Activated CD4-positive, alpha-beta memory T cell treated with anti-CD3 and anti-CD28 coated beads, Interleukin-2, amount 10 ng/mL, durations not matched to agents 7 days and 5 days (primary cell): ENCODE measurements at regions of chr4 and their contacts with region 1.

Region 1: DNA sequence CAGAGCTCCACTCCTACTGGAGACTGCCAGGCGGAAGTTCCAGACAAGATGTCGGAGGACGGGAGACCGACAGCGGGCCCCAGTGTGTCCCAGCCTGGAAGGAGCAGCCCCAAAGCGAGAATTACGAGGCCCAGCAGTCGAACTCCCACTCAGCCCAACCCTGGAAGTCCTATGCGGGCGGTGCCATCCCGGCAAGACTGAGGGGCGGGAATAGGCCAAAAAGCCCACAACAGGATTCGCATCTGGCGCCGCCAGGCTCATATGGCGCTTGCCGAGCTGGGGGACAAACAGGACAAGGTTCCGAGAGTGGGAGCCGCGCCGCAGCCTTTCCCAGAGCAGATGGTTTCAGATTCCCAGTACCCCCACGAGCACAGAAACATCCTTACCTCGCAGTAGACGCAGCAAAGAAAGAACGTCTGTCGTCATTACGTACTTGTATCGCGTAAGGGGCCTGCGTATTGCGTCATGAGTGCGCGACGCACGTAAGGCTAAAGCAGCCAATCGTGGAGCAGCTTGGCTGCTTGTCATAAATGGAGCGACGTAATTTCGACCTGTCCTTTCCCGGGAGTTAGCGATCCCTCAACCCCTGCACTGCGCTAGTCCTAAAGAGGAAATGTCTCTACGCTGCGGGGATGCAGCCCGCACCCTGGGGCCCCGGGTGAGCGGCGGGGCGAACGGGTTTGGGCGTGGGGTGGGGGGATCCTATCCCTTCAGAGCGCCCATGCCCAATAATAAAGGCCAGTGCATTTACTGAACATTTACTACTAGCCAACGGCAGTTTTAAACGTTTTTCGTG is at the starts of genes LIAS and RPL9:
- DNase-seq: peak; percentile 95
- H3K4me3 Mint-ChIP-seq: peak within 1 kb of the TSS; percentile 92
- H3K27ac Mint-ChIP-seq: peak within 1 kb of the TSS; percentile 95
- H3K4me1 Mint-ChIP-seq: peaks cover 46% of the 10 kb centered on the region
- H3K27me3 Mint-ChIP-seq: no peaks in the 10 kb centered on the region
- total RNA-seq, gene LIAS: 13.0 to 14.0 TPM
- total RNA-seq, gene RPL9: 891 to 916 TPM

Region 2: DNA sequence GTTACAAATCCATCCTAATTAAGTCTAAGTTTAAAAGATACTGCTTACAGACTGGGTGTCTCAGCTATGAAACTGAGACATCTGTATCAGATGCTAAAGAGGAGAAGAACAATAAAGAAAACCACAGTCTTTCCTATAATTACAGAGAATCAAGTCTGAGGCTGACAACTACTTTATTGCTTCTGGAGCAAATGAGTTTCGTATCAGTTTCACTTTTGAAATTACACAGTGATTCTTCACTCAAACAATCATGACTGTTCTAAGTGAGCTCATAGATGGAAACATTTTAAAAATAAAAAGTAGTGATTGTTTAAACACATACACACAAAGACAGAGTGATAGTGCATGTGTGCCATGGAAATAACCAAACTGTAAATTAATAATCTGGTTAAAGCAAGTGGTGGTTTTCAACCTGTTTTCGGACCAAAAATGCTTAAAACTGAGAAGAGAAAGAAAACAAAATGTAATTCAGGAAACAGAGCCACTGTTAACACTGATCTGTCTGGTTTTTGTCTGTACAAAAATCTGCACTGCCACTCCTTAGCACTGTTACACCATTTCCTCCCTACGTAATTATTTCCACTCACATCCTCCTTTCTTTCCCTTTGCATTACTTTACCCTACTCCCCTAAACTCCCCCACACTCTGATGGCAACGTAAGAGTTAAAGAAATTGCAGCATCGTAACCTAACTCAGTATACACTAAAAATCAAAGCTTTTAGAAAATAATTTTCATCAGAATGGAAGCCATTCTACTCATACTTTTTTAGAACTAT is 105.0 kb before region 1 on chr4:
- CTCF ChIA-PET with region 1: no interaction called
- POLR2A ChIA-PET with region 1: interaction called, 26 read pairs
- DNase-seq: peak; percentile 24
- H3K4me3 Mint-ChIP-seq: peak overlapping the region; percentile 76
- H3K27ac Mint-ChIP-seq: peak overlapping the region; percentile 98
- H3K4me1 Mint-ChIP-seq: peaks cover 64% of the 10 kb centered on the region
- H3K27me3 Mint-ChIP-seq: no peaks in the 10 kb centered on the region

Region 3: GRCh38 chr4:39446751-39447573 is 11.7 kb before region 1 on chr4:
- CTCF ChIA-PET with region 1: interaction called, 3 read pairs
- POLR2A ChIA-PET with region 1: interaction called, 36 read pairs
- DNase-seq: peak; percentile 40
- H3K4me3 Mint-ChIP-seq: peak overlapping the region; percentile 30
- H3K27ac Mint-ChIP-seq: no peak overlapping the region
- H3K4me1 Mint-ChIP-seq: peaks cover 8% of the 10 kb centered on the region
- H3K27me3 Mint-ChIP-seq: peaks cover 2% of the 10 kb centered on the region

Region 4: GRCh38 chr4:39490322-39490721 is 31.6 kb after region 1 on chr4:
- CTCF ChIA-PET with region 1: no interaction called
- POLR2A ChIA-PET with region 1: no interaction called
- DNase-seq: no peak
- H3K4me3 Mint-ChIP-seq: no peak overlapping the region
- H3K27ac Mint-ChIP-seq: no peak overlapping the region
- H3K4me1 Mint-ChIP-seq: no peaks in the 10 kb centered on the region
- H3K27me3 Mint-ChIP-seq: no peaks in the 10 kb centered on the region

Region 5: DNA sequence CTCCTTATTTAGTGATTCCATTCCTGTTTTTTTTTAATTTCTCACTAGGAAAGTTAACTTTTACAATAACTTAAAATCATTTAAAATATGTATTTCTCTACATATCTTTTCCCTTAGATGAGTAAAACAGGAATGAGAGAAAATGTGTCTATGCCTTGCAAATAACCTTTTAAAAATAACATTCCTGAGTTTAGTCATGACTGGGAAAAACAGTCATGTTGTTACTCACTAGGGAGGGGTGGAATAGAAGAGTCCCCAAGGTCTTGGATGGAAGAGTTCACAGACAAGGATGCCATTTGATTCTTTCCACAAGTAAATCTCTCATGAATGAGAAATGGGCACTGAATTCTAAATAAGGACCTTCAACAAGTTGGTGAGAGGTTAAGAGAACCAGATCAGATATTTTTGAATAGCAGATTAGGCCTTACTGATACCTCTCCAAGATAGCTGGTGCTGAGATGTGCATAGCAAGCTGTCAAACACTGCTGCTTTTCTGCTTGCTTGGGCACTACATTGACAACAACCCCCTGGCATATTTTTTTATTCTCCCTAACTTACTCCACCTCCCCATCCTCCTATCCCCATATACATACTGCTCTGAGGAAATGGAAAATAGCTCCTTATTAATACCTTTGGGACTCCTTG is 43.4 kb after region 1 on chr4:
- CTCF ChIA-PET with region 1: no interaction called
- POLR2A ChIA-PET with region 1: no interaction called
- DNase-seq: no peak
- H3K4me3 Mint-ChIP-seq: no peak overlapping the region
- H3K27ac Mint-ChIP-seq: no peak overlapping the region
- H3K4me1 Mint-ChIP-seq: no peaks in the 10 kb centered on the region
- H3K27me3 Mint-ChIP-seq: no peaks in the 10 kb centered on the region

Region 6: DNA sequence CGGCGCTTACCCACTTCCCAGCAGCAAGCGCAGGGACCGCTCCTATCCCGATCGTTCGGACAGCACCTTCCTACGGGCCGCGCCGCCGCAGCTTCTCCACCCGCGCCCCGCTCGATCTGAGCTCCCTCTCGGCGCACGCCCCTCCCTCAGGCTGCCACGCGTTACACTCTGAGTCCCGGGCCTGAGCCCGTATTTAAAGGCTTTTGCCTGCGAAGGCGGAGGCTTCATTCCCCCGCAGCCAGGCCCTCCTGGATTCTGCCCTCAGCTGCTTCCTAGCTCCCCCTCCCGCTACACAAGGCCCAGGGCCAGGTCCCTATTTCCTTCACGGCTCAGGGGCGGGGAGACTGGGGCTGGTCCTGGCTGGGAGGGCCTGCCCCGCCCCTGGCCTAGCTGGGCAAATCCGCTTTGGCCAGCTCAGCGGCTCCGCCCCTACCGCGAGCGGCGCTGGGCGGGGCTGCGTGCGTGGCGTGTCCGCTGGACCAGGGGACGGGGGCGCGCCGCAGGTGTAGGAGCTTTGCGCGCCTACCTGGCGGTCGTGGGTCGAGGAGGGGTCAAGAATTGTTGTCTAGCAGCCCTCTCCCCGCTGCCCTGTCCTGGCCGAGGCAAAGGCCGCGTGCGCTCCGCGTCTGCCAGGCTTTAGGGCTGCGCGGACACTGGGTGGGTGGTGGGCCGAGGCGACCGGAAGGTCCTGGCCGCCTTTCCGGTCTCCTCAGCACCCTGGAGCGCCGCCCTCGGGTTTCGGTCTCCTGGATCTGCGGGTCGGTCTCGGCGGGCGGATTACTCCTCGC is 68.8 kb after region 1 on chr4 and contains the start of gene UGDH:
- CTCF ChIA-PET with region 1: interaction called, 4 read pairs
- POLR2A ChIA-PET with region 1: interaction called, 15 read pairs
- DNase-seq: peak; percentile 92
- H3K4me3 Mint-ChIP-seq: peak within 1 kb of the TSS; percentile 97
- H3K27ac Mint-ChIP-seq: peak within 1 kb of the TSS; percentile 78
- H3K4me1 Mint-ChIP-seq: peaks cover 16% of the 10 kb centered on the region
- H3K27me3 Mint-ChIP-seq: no peaks in the 10 kb centered on the region
- total RNA-seq, gene UGDH: 16.9 to 18.8 TPM

Region 7: DNA sequence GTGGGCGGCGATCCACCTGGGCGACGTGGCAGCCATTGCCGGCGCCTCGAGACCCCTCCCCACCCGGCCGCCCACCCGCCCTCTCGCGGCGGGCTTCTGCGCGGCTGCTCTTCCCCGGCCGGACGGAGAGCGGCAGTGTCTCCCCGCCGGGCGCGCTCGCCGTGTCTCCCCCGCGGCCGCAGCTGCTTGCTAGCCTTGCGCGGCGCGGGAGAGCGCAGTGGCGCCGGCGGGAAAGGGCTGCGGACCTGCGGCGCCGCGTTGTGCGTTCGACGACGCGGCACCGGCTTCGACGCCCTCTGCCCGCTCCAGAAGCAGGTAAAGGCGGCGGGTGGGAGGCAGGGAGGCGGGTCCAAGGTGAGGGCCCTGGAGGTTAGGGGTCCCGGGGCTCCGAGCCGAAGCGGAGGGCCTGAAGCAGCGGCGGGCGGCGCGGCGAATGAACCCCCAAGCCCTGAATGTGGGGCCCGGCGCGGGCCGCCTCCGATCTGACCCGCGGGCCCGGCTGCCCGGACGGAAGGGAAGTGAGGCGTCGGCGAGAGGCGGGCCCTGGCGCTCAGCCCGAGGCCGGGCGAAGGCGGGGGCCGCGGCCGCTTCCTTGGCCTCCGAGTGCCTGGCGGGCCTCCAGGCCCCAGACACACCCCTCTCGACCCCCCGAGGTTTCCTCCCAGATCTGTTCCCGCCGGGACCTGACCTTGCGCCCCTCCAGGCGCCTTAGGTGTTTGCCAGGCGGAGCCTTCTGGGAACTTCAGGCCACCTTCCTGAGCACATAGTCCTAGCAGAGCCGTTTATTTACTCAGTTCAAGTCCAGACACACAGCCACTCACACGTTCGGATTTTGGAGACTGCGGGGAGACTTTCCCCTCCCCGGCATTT is 598.2 kb after region 1 on chr4 and contains the start of gene N4BP2:
- CTCF ChIA-PET with region 1: no interaction called
- POLR2A ChIA-PET with region 1: interaction called, 15 read pairs
- DNase-seq: peak; percentile 75
- H3K4me3 Mint-ChIP-seq: peak within 1 kb of the TSS; percentile 97
- H3K27ac Mint-ChIP-seq: peak within 1 kb of the TSS; percentile 99
- H3K4me1 Mint-ChIP-seq: peaks cover 37% of the 10 kb centered on the region
- H3K27me3 Mint-ChIP-seq: no peaks in the 10 kb centered on the region
- total RNA-seq, gene N4BP2: 22.5 to 26.8 TPM